A549 (cell line): ENCODE measurements at regions of chr1 and their contacts with region 1.

Region 1: GRCh38 chr1:22930235-22930912 is 42.3 kb downstream of the LACTBL1 start:
- DNase-seq: peak; percentile 34 to 82
- ATAC-seq: peak; percentile 80 to 91; a peak in 5 of 6 replicates
- H3K4me3 ChIP-seq: no peak overlapping the region
- H3K27ac ChIP-seq: no peak overlapping the region
- H3K4me1 ChIP-seq: no peaks in the 10 kb centered on the region
- CTCF ChIP-seq: peak; percentile 64
- EP300 ChIP-seq: no peak
- POLR2A ChIP-seq: no peak
- RAD21 ChIP-seq: peak; percentile 88 to 90

Region 2: GRCh38 chr1:22665752-22666151 is 264.6 kb before region 1 on chr1:
- CTCF ChIA-PET with region 1: interaction called, 129 read pairs
- POLR2A ChIA-PET with region 1: no interaction called
- DNase-seq: peak; percentile 42 to 55
- ATAC-seq: peak; percentile 80 to 84
- H3K4me3 ChIP-seq: no peak overlapping the region
- H3K27ac ChIP-seq: no peak overlapping the region
- H3K4me1 ChIP-seq: no peaks in the 10 kb centered on the region
- CTCF ChIP-seq: peak; percentile 48; the same call in 2 of the 3 replicates
- EP300 ChIP-seq: no peak
- POLR2A ChIP-seq: no peak
- RAD21 ChIP-seq: peak; percentile 78 to 85

Region 3: GRCh38 chr1:22919341-22920025 is 10.9 kb before region 1 on chr1:
- CTCF ChIA-PET with region 1: interaction called, 13 read pairs
- POLR2A ChIA-PET with region 1: no interaction called
- DNase-seq: no peak
- ATAC-seq: 0 out of 6 replicates have a peak, but pooled peaks of 1 of the 2 experiments have one; percentile 21
- H3K4me3 ChIP-seq: no peak overlapping the region
- H3K27ac ChIP-seq: 0 out of 6 replicates have a peak overlapping the region, but pooled peaks of 1 of the 2 experiments have one; percentile 21
- H3K4me1 ChIP-seq: no peaks in the 10 kb centered on the region
- CTCF ChIP-seq: no peak
- EP300 ChIP-seq: no peak
- POLR2A ChIP-seq: no peak
- RAD21 ChIP-seq: no peak

Region 4: DNA sequence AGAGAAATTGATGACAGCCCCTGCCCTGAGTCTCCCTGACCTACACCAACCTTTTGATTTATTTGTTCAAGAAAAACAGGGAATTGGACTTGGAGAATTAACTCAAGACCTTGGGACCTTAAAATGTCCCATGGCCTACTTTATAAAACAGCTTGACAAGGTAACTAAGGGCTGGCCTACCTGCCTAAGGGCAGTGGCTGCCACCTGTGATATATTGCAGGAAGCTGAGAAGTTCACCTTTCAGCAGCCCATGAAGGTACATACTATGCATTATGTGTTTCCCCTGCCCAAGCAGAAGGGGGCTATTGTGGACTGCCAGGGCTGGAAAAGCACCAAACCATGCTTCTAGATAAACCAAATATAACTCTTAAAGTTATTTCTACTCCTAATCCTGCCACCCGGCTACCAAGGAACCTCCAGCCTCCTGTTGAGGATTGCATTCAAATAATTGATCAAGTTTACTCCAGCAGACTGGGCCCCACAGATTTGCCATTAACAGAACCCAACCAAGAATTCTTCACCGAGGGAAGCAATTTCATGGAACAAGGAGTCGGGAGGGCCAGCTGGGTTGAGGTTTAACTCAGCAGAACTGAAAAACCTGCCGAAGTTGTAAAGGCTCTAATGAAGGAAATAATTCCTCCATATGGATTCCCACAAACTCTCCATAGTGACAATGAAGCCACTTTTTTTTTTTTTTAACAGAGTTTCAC is 14.1 kb after region 1 on chr1:
- CTCF ChIA-PET with region 1: interaction called, 12 read pairs
- POLR2A ChIA-PET with region 1: no interaction called
- DNase-seq: no peak
- ATAC-seq: no peak
- H3K4me3 ChIP-seq: no peak overlapping the region
- H3K27ac ChIP-seq: no peak overlapping the region
- H3K4me1 ChIP-seq: no peaks in the 10 kb centered on the region
- CTCF ChIP-seq: no peak
- EP300 ChIP-seq: no peak
- POLR2A ChIP-seq: no peak
- RAD21 ChIP-seq: no peak